Vagina (tissue), 2 donors: ENCODE measurements at regions of chr5 and their contacts with region 1.

Region 1: GRCh38 chr5:65141493-65141892 is 340.2 kb downstream of the ADAMTS6 start:
- DNase-seq: no peak
- H3K4me3 ChIP-seq: no peak overlapping the region
- H3K27ac ChIP-seq: no peak overlapping the region
- H3K4me1 ChIP-seq: no peaks in the 10 kb centered on the region
- H3K27me3 ChIP-seq: no peaks in the 10 kb centered on the region
- CTCF ChIP-seq: no peak
- POLR2A ChIP-seq: no peak

Region 2: DNA sequence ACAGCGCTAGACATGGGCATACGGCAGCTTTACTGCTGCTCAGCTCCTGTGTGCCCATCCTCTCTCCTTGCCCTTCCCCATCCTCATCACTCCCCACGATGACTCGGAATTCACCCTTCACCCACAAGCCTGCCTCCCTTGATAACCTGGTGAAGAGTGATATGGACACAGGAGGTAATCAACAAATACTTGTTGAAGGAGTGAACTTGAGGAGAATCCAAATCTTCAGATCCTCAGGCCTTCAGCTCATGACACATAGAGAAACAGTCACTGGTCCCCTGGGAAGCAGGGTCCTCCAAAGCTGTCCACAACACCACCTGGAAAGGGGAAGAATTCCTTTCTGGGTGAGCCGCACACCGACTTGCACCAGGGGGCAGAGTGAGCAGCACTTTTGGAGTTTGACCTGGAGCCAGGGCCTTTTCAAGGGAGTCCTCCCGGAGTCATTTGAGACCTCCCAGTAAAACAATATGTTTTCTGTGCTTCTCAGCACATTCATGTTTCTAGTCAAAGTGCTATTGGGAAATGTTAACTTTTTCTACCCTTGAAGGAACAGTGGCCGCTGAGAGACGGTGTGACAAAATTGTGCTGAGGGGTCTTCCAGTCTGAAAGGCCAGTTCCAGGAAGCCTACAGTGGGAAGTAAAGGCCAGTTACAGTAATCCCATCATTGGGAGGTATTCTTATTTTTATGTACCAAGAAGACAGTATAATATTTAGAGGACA is 40.4 kb before region 1 on chr5:
- intact Hi-C with region 1: loop called (anchors 1 kb)
- DNase-seq: no peak
- H3K4me3 ChIP-seq: no peak overlapping the region
- H3K27ac ChIP-seq: no peak overlapping the region
- H3K4me1 ChIP-seq: no peaks in the 10 kb centered on the region
- H3K27me3 ChIP-seq: no peaks in the 10 kb centered on the region
- CTCF ChIP-seq: peak in 1 of 3 experiments; percentile 29
- POLR2A ChIP-seq: no peak